Dendritic cell treated with granulocyte-macrophage colony-stimulating factor and Interleukin-4, amounts not matched to agents 40 ng/mL and 50 ng/mL, for 4 days (primary cell): ENCODE measurements at regions of chr11 and their contacts with region 1.

Region 1: GRCh38 chr11:72736452-72737069 is 15.6 kb downstream of the ARAP1 start:
- H3K4me3 Mint-ChIP-seq: peak overlapping the region; percentile 95
- H3K27ac Mint-ChIP-seq: peak overlapping the region; percentile 90
- H3K4me1 Mint-ChIP-seq: peaks cover 88% of the 10 kb centered on the region
- H3K27me3 Mint-ChIP-seq: no peaks in the 10 kb centered on the region

Region 2: DNA sequence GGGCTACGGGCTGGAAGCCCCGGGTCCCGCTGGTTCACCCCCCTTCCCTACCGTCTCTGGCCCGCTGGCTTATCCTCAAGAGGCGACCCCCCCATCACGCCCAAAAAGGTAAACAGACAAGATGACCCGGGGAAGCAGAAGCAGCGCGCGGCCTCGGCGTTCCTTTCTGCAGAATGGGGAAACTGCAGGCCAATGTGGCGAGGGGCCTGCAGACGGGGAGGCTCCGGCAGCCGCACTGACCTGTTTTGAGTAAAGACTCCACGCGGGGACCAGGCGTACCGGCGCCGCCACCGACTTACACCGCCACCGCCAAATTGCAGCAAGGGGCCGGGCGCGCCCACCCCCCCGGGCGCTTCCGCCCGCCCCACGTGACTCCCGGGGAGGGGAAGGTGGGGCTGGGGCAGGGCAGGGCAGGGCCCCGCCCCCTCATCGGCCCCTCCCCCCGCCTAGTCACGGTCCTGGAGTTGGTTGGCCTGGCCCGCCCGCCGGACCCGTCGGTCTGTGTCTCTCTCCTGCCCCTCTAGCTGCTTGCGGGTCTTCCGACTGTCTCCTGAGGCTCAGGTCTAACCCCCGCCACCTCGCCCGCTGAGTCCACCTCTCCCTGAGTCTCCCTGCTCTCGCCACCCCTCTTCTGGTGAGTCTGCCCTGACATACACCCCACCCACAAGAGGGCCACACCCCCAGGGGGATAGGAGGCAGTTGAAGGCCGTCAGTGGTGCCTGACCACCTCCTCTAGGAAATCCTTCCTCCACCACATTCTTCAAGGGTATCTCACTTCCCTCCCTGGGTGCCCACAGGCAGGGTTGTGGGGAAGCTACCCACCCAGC is 15.7 kb after region 1 on chr11 and contains the start of gene ARAP1:
- intact Hi-C with region 1: loop called (anchors 2 kb)
- H3K4me3 Mint-ChIP-seq: peak within 1 kb of the TSS; percentile 89
- H3K27ac Mint-ChIP-seq: peak within 1 kb of the TSS; percentile 90
- H3K4me1 Mint-ChIP-seq: peaks cover 83% of the 10 kb centered on the region
- H3K27me3 Mint-ChIP-seq: peaks cover 8% of the 10 kb centered on the region

Region 3: GRCh38 chr11:72807021-72807693 is 70.6 kb after region 1 on chr11:
- intact Hi-C with region 1: loop called (anchors 5 kb)
- H3K4me3 Mint-ChIP-seq: peak overlapping the region; percentile 51
- H3K27ac Mint-ChIP-seq: peak overlapping the region; percentile 90
- H3K4me1 Mint-ChIP-seq: peaks cover 68% of the 10 kb centered on the region
- H3K27me3 Mint-ChIP-seq: no peaks in the 10 kb centered on the region

Region 4: GRCh38 chr11:73671701-73672100 is 935.1 kb after region 1 on chr11:
- intact Hi-C with region 1: no loop called
- H3K4me3 Mint-ChIP-seq: no peak overlapping the region
- H3K27ac Mint-ChIP-seq: no peak overlapping the region
- H3K4me1 Mint-ChIP-seq: peaks cover 16% of the 10 kb centered on the region
- H3K27me3 Mint-ChIP-seq: no peaks in the 10 kb centered on the region